ENCODE measurements at regions of chr4 and their contacts with region 1.

Region 1: GRCh38 chr4:170027181-170027829 is 1.1 kb upstream of the MFAP3L start:
- DNase-seq: peak; percentile 50 to 95
- H3K4me3 ChIP-seq: peak overlapping the region; percentile 84 to 93
- H3K27ac ChIP-seq: peak overlapping the region in 1 of 2 donors; percentile 88
- H3K4me1 ChIP-seq: peaks cover 0 to 11% of the 10 kb centered on the region in 2 donors
- H3K27me3 ChIP-seq: no peaks in the 10 kb centered on the region
- CTCF ChIP-seq: no peak

Region 2: DNA sequence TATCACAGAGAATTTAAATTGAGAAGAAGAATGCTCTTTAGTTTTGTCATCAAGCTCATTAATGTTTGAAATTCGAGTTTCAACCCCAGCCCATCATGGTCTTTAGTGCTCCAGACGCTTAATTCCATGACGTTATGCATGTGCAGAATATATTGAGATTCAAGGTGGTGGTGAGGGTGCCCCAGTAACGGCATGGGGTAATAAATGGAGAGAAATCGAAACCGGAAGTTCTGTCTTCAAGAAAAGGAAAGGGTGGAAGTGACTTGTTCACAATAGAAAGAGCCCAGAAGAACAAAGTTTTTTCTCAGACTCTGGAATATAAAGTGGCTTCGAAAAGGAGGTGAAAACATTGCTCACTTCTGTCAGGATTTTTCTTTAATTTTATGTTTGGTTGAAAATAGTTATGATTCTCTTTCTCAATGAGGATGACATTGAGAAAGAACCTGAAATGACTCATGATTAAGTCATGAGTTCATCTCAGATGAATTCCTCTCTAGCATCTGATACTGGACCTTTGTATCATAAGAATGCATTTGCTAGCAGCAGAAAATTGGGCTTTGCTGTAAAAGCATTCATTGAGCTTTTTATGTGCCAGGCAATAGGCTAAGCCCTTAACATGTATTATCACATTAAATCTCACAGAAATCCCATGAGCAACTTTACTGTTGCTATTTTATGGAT is 1546.2 kb before region 1 on chr4:
- intact Hi-C with region 1: loop called (anchors 10 kb)
- DNase-seq: no peak
- H3K4me3 ChIP-seq: peak overlapping the region; percentile 64 to 75
- H3K27ac ChIP-seq: peak overlapping the region; percentile 82 to 91
- H3K4me1 ChIP-seq: peaks cover 0 to 6% of the 10 kb centered on the region in 2 donors
- H3K27me3 ChIP-seq: no peaks in the 10 kb centered on the region
- CTCF ChIP-seq: no peak

Region 3: GRCh38 chr4:169612871-169613859 is 414.1 kb before region 1 on chr4:
- intact Hi-C with region 1: loop called (anchors 5 kb)
- DNase-seq: peak; percentile 30 to 89
- H3K4me3 ChIP-seq: peak overlapping the region; percentile 74 to 88
- H3K27ac ChIP-seq: peak overlapping the region; percentile 90 to 97
- H3K4me1 ChIP-seq: peaks cover 0 to 9% of the 10 kb centered on the region in 2 donors
- H3K27me3 ChIP-seq: no peaks in the 10 kb centered on the region
- CTCF ChIP-seq: peak; percentile 34 to 75 (median 64)

Region 4: GRCh38 chr4:169757575-169758184 is 269.6 kb before region 1 on chr4 and contains the start of gene HPF1:
- intact Hi-C with region 1: loop called (anchors 5 kb)
- DNase-seq: peak; percentile 76 to 96
- H3K4me3 ChIP-seq: peak within 1 kb of the TSS; percentile 65 to 91
- H3K27ac ChIP-seq: peak within 1 kb of the TSS; percentile 40 to 68
- H3K4me1 ChIP-seq: peaks cover 0 to 13% of the 10 kb centered on the region in 2 donors
- H3K27me3 ChIP-seq: no peaks in the 10 kb centered on the region
- CTCF ChIP-seq: no peak
- total RNA-seq, gene HPF1: 0.53 TPM

Region 5: DNA sequence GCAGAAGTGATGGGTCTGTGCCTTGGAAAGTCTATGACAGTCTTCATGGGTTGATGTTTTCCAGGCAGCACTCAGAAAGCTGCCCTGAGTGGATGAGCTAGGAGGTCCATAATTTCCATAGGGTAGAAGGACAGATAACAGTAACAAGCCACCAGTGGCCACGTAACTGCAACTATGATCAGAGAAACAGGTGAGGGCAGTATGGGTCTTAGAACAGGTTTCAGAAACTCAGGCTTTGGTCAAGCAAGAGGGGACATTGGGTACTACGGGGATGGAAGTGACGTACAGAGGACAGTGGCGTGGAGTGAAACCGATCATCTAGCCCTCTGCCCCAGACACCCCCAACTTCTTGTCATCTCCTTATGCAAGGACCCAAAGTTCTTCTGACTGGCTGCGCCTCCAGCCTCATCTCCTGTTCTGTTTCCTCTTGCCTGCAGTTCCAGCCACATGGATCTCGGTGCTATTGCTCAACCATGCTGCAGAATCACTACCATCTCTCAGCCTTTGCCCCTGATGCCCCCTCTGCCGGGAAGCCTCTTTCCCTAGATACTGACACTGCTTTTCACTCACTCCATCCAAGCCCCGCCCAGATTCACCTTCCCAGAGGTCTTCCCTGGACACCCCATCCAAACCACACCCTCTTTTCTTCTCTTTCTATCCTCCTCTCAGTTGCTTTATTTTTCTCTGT is 124.5 kb before region 1 on chr4:
- intact Hi-C with region 1: loop called (anchors 5 kb)
- DNase-seq: no peak
- H3K4me3 ChIP-seq: no peak overlapping the region
- H3K27ac ChIP-seq: no peak overlapping the region
- H3K4me1 ChIP-seq: no peaks in the 10 kb centered on the region
- H3K27me3 ChIP-seq: no peaks in the 10 kb centered on the region
- CTCF ChIP-seq: peak in 2 of 3 experiments; percentile 28 to 47

Region 6: GRCh38 chr4:169963998-169964397 is 63.3 kb before region 1 on chr4:
- intact Hi-C with region 1: loop called (anchors 2 kb)
- DNase-seq: no peak
- H3K4me3 ChIP-seq: no peak overlapping the region
- H3K27ac ChIP-seq: peak overlapping the region; percentile 62 to 72
- H3K4me1 ChIP-seq: peaks cover 3 to 17% of the 10 kb centered on the region in 2 donors
- H3K27me3 ChIP-seq: no peaks in the 10 kb centered on the region
- CTCF ChIP-seq: no peak

Region 7: GRCh38 chr4:170004651-170005295 is 22.5 kb before region 1 on chr4:
- intact Hi-C with region 1: loop called (anchors 1 kb)
- DNase-seq: no peak
- H3K4me3 ChIP-seq: no peak overlapping the region
- H3K27ac ChIP-seq: peak overlapping the region; percentile 4 to 52
- H3K4me1 ChIP-seq: peaks cover 0 to 21% of the 10 kb centered on the region in 2 donors
- H3K27me3 ChIP-seq: no peaks in the 10 kb centered on the region
- CTCF ChIP-seq: no peak